CD8-positive, alpha-beta T cell (primary cell): ENCODE measurements at regions of chr6 and their contacts with region 1.

Region 1: GRCh38 chr6:167849846-167850459 is 23.2 kb downstream of the AFDN start:
- DNase-seq: no peak
- ATAC-seq: no peak
- H3K4me3 ChIP-seq: no peak overlapping the region
- H3K4me3 Mint-ChIP-seq: no peak overlapping the region
- H3K27ac ChIP-seq: no peak overlapping the region
- H3K27ac Mint-ChIP-seq: no peak overlapping the region
- H3K4me1 ChIP-seq: no peaks in the 10 kb centered on the region
- H3K4me1 Mint-ChIP-seq: no peaks in the 10 kb centered on the region
- H3K27me3 ChIP-seq: no peaks in the 10 kb centered on the region
- H3K27me3 Mint-ChIP-seq: peaks cover 28% of the 10 kb centered on the region
- CTCF ChIP-seq: no peak

Region 2: GRCh38 chr6:167815296-167816006 is 34.5 kb before region 1 on chr6:
- CTCF ChIA-PET with region 1: no interaction called
- POLR2A ChIA-PET with region 1: no interaction called
- intact Hi-C with region 1: loop called in 1 of 2 experiments (anchors 1 kb)
- DNase-seq: no peak
- ATAC-seq: no peak
- H3K4me3 ChIP-seq: no peak overlapping the region
- H3K4me3 Mint-ChIP-seq: peak overlapping the region; percentile 35
- H3K27ac ChIP-seq: no peak overlapping the region
- H3K27ac Mint-ChIP-seq: no peak overlapping the region
- H3K4me1 ChIP-seq: no peaks in the 10 kb centered on the region
- H3K4me1 Mint-ChIP-seq: no peaks in the 10 kb centered on the region
- H3K27me3 ChIP-seq: peaks cover 5 to 12% of the 10 kb centered on the region in 2 experiments
- H3K27me3 Mint-ChIP-seq: peaks cover 48% of the 10 kb centered on the region
- CTCF ChIP-seq: no peak

Region 3: DNA sequence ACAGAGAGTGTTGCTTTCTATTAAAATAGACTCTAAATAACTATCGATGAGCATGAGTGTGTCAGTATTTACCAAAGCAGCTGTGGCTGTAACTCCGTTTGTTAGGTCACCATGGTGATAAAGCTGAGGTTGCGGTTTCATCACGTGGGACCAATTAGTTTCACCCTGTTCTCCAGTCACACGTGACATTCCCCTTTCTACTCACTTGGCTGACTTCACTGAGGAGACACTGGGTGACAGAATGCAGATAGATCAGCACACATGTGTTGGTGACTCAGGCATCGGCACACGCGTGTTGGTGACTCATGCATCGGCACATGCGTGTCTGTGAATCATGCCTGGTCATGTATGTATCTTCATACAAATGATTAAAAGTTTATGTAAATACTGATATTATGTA is 1118.3 kb after region 1 on chr6:
- CTCF ChIA-PET with region 1: no interaction called
- POLR2A ChIA-PET with region 1: no interaction called
- intact Hi-C with region 1: no loop called
- DNase-seq: peak in 4 of 9 experiments; percentile 22 to 82 (median 50)
- ATAC-seq: no peak
- H3K4me3 ChIP-seq: no peak overlapping the region
- H3K4me3 Mint-ChIP-seq: no peak overlapping the region
- H3K27ac ChIP-seq: no peak overlapping the region
- H3K27ac Mint-ChIP-seq: no peak overlapping the region
- H3K4me1 ChIP-seq: no peaks in the 10 kb centered on the region
- H3K4me1 Mint-ChIP-seq: no peaks in the 10 kb centered on the region
- H3K27me3 ChIP-seq: no peaks in the 10 kb centered on the region
- H3K27me3 Mint-ChIP-seq: peaks cover 29% of the 10 kb centered on the region
- CTCF ChIP-seq: no peak